Activated T-helper 2 cell treated with anti-CD3 and anti-CD28 coated beads, Interferon-gamma antibody, Interleukin-2, Interleukin-4, amounts not matched to agents 10 μg/mL and 5 μg/mL and 100 μg/mL, durations not matched to agents 14 hours and 24 hours and 36 hours (primary cell): ENCODE measurements at regions of chr5 and their contacts with region 1.

Region 1: DNA sequence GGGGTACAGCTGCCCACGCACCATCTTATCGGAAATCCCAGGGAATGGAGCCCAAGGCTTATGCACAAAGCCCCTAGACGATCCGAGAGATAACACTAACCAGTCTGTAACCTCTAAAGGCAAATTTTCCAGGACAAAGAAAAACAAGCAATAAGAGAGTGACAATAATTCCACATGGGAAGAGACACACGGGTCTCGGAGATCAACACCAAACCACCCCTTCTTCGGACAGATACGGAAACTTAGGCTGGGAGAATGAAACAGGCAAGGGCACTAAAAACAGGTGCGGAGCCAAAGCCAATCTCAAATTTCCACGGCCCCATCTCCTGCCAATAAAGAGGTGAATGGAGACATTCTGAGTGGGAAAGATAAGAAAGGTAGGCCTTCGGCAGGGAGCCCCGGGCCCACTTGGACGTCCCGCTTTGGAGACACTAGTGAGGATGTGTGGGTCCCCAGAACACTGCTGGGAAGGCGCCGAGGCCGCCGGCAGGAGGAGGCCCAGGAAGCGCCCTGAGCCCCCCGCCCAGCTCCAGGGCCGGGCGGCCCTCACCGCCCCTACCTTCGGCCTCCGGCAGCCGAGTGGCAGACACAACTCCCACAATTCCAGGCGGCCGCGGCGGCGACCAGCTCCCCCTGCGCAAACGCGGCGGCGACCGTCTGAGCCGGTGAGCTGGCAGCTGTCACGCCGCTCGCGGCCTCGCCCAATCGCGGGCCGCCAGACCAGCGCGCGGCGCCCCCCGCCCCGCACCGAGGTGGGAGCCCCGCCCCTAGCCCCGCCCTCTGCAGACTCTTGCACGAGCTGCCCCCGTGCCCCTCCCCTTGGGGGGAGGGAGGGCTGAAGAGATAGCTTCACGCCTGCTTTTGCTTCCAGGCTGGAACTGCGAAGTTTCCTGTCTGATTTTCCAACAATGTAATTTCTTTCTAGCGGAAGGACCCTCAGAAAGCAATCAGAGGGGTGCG is at the start of gene SIL1:
- DNase-seq: peak; percentile 93
- H3K4me3 Mint-ChIP-seq: peak within 1 kb of the TSS; percentile 92
- H3K27ac Mint-ChIP-seq: peak within 1 kb of the TSS; percentile 84
- H3K4me1 Mint-ChIP-seq: peaks cover 21% of the 10 kb centered on the region
- H3K27me3 Mint-ChIP-seq: no peaks in the 10 kb centered on the region
- total RNA-seq, gene SIL1: 31.1 and 37.8 TPM in 2 replicates

Region 2: GRCh38 chr5:138449501-138450239 is 748.3 kb before region 1 on chr5:
- intact Hi-C with region 1: no loop called
- DNase-seq: peak; percentile 69
- H3K4me3 Mint-ChIP-seq: peak overlapping the region; percentile 39
- H3K27ac Mint-ChIP-seq: peak overlapping the region; percentile 19
- H3K4me1 Mint-ChIP-seq: peaks cover 6% of the 10 kb centered on the region
- H3K27me3 Mint-ChIP-seq: peaks cover 2% of the 10 kb centered on the region

Region 3: DNA sequence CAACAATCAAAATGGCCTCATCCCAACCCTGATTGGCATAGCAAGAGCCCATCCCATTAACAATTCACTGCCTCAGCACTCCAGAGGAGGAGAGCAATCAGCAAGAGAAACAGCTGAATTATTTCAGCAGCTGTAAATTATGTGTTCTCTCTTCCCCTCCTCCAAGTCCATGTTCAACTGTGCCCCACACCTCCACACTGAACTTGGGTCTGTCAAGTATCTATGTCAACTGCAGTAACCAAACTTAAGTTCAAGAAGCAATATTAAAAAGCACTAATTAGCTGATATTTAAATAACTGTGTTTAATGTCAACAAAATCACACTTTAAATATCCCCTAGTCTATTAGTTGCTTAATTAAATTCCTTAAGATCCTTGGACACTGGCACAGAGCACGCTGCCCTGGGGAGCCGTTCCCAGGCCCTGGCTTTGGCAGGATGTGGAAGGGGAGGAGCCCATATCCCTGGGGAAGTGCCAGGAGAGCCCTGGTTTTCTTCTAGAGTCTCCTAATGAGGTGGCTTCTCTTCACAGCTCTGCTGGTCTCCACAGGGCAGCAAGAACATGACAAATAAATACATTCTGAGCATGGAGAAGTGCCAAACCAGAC is 50.4 kb before region 1 on chr5:
- intact Hi-C with region 1: loop called (anchors 5 kb)
- DNase-seq: no peak
- H3K4me3 Mint-ChIP-seq: no peak overlapping the region
- H3K27ac Mint-ChIP-seq: no peak overlapping the region
- H3K4me1 Mint-ChIP-seq: peaks cover 29% of the 10 kb centered on the region
- H3K27me3 Mint-ChIP-seq: no peaks in the 10 kb centered on the region

Region 4: DNA sequence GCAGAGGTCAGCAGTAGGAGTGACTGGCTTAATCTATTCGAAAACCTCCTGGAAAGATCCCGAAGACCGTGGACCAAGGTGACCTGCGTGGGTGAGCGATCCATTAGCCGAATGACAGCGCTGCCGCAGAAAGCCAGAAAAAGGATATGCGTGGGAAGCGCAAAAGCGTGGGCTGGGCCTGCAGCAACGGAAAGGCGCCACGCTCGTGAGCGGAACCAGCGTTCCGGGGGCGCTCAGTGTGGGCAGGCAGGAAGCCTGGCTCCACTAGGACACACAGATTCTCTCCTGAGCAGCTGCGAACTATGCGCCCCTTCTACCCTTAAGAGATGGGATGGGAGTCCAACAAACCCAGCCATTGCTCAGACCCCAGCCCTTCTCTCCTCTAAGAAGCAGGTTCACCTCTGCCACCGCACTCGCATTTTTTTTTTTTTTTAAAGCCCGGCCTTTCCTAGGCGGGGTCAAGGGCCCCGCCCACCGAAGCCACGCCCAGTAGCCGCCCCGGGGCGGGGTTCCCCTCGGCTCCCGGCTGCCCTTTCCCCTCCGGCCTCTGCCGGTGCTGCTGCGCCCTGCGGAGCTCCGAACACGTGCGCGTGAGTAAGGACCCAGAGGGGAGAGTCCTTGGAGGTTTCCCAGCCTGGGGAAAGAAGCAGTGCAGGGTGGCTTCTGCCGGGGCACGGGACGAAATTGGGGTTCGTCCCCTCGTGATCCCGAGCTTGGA is 75.7 kb after region 1 on chr5:
- intact Hi-C with region 1: loop called (anchors 1 kb)
- DNase-seq: peak; percentile 88
- H3K4me3 Mint-ChIP-seq: peak overlapping the region; percentile 94
- H3K27ac Mint-ChIP-seq: peak overlapping the region; percentile 42
- H3K4me1 Mint-ChIP-seq: peaks cover 42% of the 10 kb centered on the region
- H3K27me3 Mint-ChIP-seq: no peaks in the 10 kb centered on the region

Region 5: GRCh38 chr5:139884144-139884543 is 686.2 kb after region 1 on chr5:
- intact Hi-C with region 1: no loop called
- DNase-seq: no peak
- H3K4me3 Mint-ChIP-seq: no peak overlapping the region
- H3K27ac Mint-ChIP-seq: no peak overlapping the region
- H3K4me1 Mint-ChIP-seq: no peaks in the 10 kb centered on the region
- H3K27me3 Mint-ChIP-seq: peaks cover 2% of the 10 kb centered on the region